Activated naive CD4-positive, alpha-beta T cell treated with anti-CD3 and anti-CD28 coated beads for 36 hours (primary cell): ENCODE measurements at regions of chr18 and their contacts with region 1.

Region 1: DNA sequence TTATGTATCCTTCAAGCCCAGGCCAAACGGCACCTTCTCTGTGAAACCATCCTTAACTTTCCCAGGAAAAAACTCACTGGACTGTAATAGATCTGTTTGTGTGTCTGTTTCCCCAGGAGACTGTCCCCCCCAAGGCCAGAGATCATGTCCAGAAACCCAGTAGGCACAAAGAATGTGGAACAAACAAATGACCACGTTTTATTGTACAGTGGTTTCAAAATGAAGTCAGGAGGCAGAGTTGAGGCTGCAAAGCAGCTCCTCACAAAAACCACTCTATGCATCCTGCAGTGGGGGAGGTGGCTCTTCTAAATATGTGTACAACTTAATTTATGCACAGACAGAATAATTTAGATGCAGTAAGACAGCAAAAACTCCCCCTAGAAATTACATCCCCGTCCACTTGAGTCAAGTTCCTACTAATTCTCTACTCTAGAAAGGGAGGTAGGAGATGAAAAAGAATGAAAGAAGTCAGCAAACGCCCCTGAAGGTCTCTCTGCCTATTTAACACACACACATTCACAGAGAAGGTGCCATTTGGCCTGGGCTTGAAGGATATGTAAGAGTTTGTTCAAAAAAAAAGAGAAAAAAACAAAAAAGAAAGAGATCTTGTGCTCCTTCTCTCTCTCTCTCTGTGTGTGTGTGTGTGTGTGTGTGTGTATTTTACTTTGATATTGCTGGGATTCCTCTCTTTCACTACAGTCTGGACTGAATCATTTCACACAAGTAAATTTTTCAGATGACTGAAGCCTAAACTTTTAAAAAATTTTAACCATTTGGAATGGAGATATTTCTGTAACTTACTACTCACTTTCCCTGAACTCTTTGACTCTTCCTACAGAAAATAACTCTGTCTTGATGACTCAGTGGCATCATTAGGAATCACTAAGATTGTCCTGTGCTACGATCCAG is 19.5 kb downstream of the BCL2 start:
- DNase-seq: peak; percentile 72
- H3K4me3 Mint-ChIP-seq: peak overlapping the region; percentile 17
- H3K27ac Mint-ChIP-seq: peak overlapping the region; percentile 86
- H3K4me1 Mint-ChIP-seq: peaks cover 73% of the 10 kb centered on the region
- H3K27me3 Mint-ChIP-seq: no peaks in the 10 kb centered on the region

Region 2: GRCh38 chr18:63224630-63225029 is 75.5 kb before region 1 on chr18:
- CTCF ChIA-PET with region 1: interaction called, 3 read pairs
- intact Hi-C with region 1: loop called (anchors 1 kb)
- DNase-seq: peak; percentile 81
- H3K4me3 Mint-ChIP-seq: peak overlapping the region; percentile 45
- H3K27ac Mint-ChIP-seq: peak overlapping the region; percentile 85
- H3K4me1 Mint-ChIP-seq: peaks cover 80% of the 10 kb centered on the region
- H3K27me3 Mint-ChIP-seq: no peaks in the 10 kb centered on the region

Region 3: GRCh38 chr18:63314062-63314790 is 14.1 kb after region 1 on chr18:
- CTCF ChIA-PET with region 1: interaction called, 14 read pairs
- intact Hi-C with region 1: loop called (anchors 1 kb)
- DNase-seq: no peak
- H3K4me3 Mint-ChIP-seq: peak overlapping the region; percentile 98
- H3K27ac Mint-ChIP-seq: peak overlapping the region; percentile 57
- H3K4me1 Mint-ChIP-seq: peaks cover 60% of the 10 kb centered on the region
- H3K27me3 Mint-ChIP-seq: no peaks in the 10 kb centered on the region